Endothelial cell of umbilical vein (primary cell): ENCODE measurements at regions of chr19 and their contacts with region 1.

Region 1: DNA sequence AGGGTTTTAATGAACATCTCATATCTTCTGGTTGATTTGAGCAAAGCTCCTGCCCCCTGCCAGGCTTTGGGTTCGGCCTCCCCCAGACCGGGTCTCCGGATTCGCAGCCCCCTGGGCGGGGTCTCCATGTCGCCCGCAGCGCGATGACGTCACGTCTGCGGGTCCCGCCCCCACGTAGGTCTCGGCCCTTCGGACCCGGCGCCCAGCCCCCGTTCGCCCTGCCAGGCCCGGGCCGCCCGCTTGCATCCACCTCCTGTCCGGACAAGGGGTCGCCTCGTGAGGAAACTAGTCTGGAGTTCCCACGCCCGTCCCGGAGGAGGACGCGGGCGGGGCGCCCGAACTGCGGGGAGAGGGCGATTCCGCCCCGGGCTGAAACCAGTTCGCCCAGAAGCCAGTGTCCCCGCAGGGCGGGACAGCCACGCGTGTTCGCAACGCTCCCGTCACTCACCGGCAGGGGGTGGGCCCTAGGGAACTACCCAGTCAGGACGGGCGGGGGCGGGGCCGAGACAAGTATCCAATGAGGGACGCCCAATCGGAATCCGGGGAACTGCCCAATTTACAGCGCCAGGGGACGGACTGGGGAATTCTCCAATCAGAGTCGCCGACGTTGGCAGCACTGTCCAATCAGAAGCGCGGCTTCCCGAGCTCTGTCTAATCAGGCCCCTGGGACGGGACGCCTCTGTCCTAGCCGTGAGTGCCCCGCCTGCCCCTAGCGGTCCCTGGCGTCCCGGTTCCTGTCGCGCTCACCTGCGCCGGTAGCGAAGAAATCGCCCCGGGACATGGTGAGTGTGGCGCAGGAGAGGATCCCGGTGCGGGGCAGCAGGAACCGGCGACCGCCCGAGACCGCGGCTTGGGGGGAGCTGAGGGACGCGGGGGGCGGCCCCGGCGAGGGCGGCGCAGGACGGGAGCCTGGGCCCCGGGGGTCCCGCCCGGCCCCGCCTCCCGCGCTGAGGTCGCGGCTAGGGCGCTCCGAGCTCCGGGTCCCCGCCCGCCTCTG is at the start of gene ZNF555:
- DNase-seq: peak; percentile 99
- H3K4me3 ChIP-seq: peak within 1 kb of the TSS; percentile 67 to 86 (median 84)
- H3K27ac ChIP-seq: peak within 1 kb of the TSS; percentile 83
- H3K4me1 ChIP-seq: peaks cover 5% of the 10 kb centered on the region
- H3K27me3 ChIP-seq: no peaks in the 10 kb centered on the region
- CTCF ChIP-seq: peak; percentile 28 to 50
- POLR2A ChIP-seq: peak; percentile 15
- total RNA-seq, gene ZNF555: 4.7 and 5.4 TPM in 2 replicates

Region 2: GRCh38 chr19:2588081-2588777 is 252.9 kb before region 1 on chr19:
- CTCF ChIA-PET with region 1: no interaction called
- POLR2A ChIA-PET with region 1: no interaction called
- dilution Hi-C with region 1: no loop called
- intact Hi-C with region 1: no loop called
- DNase-seq: peak; percentile 23
- H3K4me3 ChIP-seq: no peak overlapping the region
- H3K27ac ChIP-seq: no peak overlapping the region
- H3K4me1 ChIP-seq: peaks cover 3% of the 10 kb centered on the region
- H3K27me3 ChIP-seq: peaks cover 4 to 14% of the 10 kb centered on the region in 2 experiments
- CTCF ChIP-seq: no peak
- POLR2A ChIP-seq: no peak

Region 3: DNA sequence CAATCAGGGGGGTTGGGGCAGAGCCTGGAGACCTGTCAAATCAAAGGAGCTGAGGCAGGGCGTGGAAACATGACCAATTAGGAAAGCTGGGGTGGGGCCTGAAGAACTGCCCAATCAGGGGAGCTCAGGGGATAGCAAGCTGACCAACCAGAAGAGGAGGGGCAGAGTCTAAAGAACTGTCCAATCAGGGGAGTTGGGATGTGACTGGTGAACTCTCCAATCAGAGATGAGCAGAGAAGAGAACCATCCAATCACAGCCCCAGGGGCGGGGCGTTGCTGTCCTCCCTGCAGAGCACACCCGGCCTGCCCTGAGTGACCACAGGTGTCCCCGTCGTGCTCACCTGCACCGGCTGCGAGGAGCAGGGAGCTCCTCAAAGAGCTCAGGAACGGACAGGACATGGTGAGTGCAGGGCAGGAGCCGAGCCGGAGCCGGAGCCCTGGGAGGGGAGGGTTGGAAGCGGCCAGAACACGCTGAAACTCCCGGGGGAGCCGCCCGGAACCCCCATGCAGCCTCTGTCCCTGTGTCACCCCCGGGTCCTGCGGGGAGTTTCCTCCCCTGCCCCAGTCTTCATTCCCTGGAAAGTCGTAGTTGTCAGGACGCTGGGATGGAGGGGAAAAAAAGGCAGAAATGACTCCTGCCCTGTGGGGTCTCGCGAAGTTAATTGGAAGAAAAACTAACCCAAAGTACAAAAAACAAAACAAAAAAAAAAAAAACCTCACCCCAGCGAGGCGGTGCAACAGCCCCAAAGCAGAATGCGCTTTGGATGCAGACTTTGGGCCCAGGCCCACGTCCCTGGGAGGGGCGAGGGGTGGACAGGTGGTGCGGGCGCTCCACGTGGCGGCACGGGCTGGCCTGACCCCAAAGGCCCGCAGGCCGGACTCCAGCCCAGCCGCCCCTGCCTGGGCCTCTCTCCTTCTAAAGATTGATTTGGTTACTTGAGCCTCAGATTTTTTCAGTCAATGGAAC is 26.2 kb after region 1 on chr19 and contains the start of gene ZNF556:
- CTCF ChIA-PET with region 1: no interaction called
- POLR2A ChIA-PET with region 1: no interaction called
- dilution Hi-C with region 1: no loop called
- intact Hi-C with region 1: loop called (anchors 2 kb)
- DNase-seq: no peak
- H3K4me3 ChIP-seq: no peak within 1 kb of the TSS
- H3K27ac ChIP-seq: no peak within 1 kb of the TSS
- H3K4me1 ChIP-seq: no peaks in the 10 kb centered on the region
- H3K27me3 ChIP-seq: no peaks in the 10 kb centered on the region
- CTCF ChIP-seq: no peak
- POLR2A ChIP-seq: no peak
- total RNA-seq, gene ZNF556: not detected in 2 replicates